Psoas muscle (tissue), 8 donors: ENCODE measurements at regions of chr15 and their contacts with region 1.

Region 1: GRCh38 chr15:79769069-79769481 is 127.7 kb downstream of the MTHFS start:
- DNase-seq: no peak
- ATAC-seq: peak in 3 of 4 donors; percentile 35 to 72 (median 49)
- H3K4me3 ChIP-seq: no peak overlapping the region
- H3K27ac ChIP-seq: no peak overlapping the region
- H3K4me1 ChIP-seq: no peaks in the 10 kb centered on the region
- H3K27me3 ChIP-seq: peaks cover 0 to 4% (median 0%) of the 10 kb centered on the region in 3 donors
- CTCF ChIP-seq: peak; percentile 33

Region 2: GRCh38 chr15:79853458-79854328 is 84.6 kb after region 1 on chr15:
- intact Hi-C with region 1: loop called in 1 of 2 experiments (anchors 5 kb)
- DNase-seq: peak; percentile 40 to 52
- ATAC-seq: peak; percentile 88 to 98 (median 94)
- H3K4me3 ChIP-seq: no peak overlapping the region
- H3K27ac ChIP-seq: no peak overlapping the region
- H3K4me1 ChIP-seq: no peaks in the 10 kb centered on the region
- H3K27me3 ChIP-seq: no peaks in the 10 kb centered on the region
- CTCF ChIP-seq: peak; percentile 91